ENCODE measurements at regions of chr3 and their contacts with region 1.

Region 1: GRCh38 chr3:52339612-52340011 is 23.5 kb downstream of the DNAH1 start:
- DNase-seq: peak; percentile 57
- H3K4me3 ChIP-seq: no peak overlapping the region
- CTCF ChIP-seq: peak; percentile 51

Region 2: GRCh38 chr3:52052831-52053306 is 286.7 kb before region 1 on chr3:
- CTCF ChIA-PET with region 1: no interaction called
- POLR2A ChIA-PET with region 1: no interaction called
- DNase-seq: no peak
- H3K4me3 ChIP-seq: peak overlapping the region; percentile 92
- CTCF ChIP-seq: peak; percentile 66

Region 3: GRCh38 chr3:52220380-52221026 is 119.1 kb before region 1 on chr3:
- CTCF ChIA-PET with region 1: interaction called, 389 read pairs
- POLR2A ChIA-PET with region 1: no interaction called
- DNase-seq: no peak
- H3K4me3 ChIP-seq: no peak overlapping the region
- CTCF ChIP-seq: peak; percentile 98

Region 4: DNA sequence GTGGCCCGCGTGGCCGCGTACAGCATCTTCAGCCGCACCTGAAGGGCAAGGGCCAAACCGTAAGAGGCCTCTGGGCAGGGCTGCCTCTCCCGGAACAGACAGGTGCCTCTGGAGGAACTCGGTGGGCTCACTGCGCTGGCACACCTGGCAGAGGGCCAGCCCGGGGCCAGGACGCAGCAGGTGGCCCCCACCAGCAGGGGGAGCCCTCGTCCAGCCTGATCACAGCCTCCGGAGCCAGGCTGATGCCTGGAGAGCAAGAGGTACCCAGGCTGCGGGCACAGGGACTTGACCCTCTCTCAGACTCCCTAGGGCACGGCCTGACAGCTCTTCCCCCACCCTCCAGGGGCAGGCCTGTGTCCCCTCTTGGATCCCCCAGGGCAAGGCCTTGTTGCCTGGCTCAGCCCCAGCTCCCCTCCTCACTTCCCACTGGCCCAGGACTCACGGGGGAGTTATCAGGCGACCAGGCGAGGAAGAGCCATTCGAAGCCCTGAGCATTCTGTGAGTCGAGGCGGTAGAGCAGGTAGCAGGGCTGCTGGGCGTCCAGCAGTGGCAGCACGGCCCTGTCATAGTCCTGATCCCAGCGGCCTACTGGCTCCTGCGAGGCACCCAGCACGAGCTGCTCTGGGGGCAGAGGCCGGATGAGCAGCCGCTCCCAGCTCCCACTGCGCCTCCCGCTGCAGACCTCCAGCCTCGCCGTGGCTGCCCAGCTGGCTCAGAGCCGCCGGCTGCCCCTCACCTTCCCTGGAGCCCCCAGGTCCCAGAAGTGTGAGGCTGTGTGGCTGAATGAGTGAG is 107.9 kb before region 1 on chr3:
- CTCF ChIA-PET with region 1: interaction called, 50 read pairs
- POLR2A ChIA-PET with region 1: no interaction called
- DNase-seq: no peak
- H3K4me3 ChIP-seq: no peak overlapping the region
- CTCF ChIP-seq: peak; percentile 82

Region 5: GRCh38 chr3:52270252-52270754 is 69.3 kb before region 1 on chr3:
- CTCF ChIA-PET with region 1: interaction called, 498 read pairs
- POLR2A ChIA-PET with region 1: no interaction called
- DNase-seq: no peak
- H3K4me3 ChIP-seq: no peak overlapping the region
- CTCF ChIP-seq: no peak

Region 6: GRCh38 chr3:52313774-52314188 is 25.8 kb before region 1 on chr3:
- CTCF ChIA-PET with region 1: interaction called, 14 read pairs
- POLR2A ChIA-PET with region 1: no interaction called
- DNase-seq: no peak
- H3K4me3 ChIP-seq: no peak overlapping the region
- CTCF ChIP-seq: no peak

Region 7: DNA sequence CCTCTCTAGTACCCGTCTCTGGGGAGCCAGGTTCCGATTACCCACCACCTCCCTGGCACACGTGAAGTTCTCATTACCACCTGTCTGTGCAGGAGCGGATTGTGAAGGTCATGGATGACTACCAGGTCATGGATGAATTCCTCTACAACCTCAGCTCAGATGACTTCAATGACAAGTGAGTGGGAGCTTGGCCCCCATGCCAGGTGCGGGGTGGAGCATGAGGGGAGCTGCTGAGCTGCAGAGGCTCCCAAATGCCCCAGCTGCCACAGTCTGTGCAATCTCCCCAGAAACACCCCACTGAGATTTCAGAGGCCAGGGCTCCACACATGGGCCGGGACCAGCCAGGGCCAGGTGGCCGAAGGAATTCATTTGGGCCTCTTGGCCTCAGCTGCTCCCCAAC is 10.8 kb after region 1 on chr3:
- CTCF ChIA-PET with region 1: interaction called, 48 read pairs
- POLR2A ChIA-PET with region 1: no interaction called
- DNase-seq: no peak
- H3K4me3 ChIP-seq: no peak overlapping the region
- CTCF ChIP-seq: no peak

Region 8: GRCh38 chr3:52440249-52440551 is 100.6 kb after region 1 on chr3:
- CTCF ChIA-PET with region 1: no interaction called
- POLR2A ChIA-PET with region 1: no interaction called
- DNase-seq: no peak
- H3K4me3 ChIP-seq: no peak overlapping the region
- CTCF ChIP-seq: no peak